OCI-LY7 (cell line): ENCODE measurements at regions of chr4 and their contacts with region 1.

Region 1: DNA sequence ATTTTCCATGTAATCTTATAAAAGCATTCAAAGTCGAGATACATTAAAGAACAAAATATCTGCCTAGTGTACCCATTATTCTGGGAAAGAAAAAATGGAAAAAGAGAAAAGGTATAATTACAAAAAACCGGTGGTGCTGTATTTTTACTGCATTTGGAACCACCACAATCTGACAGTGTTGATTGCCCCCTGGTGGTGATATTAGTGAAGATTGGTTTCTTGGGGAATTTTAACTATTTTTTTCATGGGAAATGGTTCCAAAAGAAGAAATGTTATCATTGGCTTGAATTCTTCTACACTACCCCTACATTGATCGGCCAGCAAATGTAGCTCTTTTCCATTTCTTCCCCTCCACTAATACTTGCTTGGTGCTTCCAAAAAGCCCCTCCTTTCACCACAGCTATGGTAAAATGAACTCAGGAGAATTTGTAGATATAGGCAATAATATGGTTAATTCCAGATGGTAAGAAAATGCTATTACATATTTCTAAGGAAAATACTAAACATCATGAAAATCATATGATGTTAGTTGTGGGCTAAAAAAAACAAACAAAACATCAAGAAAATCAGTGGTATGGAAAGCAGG is 50.0 kb downstream of the COX18 start:
- DNase-seq: peak; percentile 61
- H3K4me3 ChIP-seq: no peak overlapping the region
- H3K27ac ChIP-seq: no peak overlapping the region
- H3K4me1 ChIP-seq: no peaks in the 10 kb centered on the region
- CTCF ChIP-seq: peak; percentile 91

Region 2: DNA sequence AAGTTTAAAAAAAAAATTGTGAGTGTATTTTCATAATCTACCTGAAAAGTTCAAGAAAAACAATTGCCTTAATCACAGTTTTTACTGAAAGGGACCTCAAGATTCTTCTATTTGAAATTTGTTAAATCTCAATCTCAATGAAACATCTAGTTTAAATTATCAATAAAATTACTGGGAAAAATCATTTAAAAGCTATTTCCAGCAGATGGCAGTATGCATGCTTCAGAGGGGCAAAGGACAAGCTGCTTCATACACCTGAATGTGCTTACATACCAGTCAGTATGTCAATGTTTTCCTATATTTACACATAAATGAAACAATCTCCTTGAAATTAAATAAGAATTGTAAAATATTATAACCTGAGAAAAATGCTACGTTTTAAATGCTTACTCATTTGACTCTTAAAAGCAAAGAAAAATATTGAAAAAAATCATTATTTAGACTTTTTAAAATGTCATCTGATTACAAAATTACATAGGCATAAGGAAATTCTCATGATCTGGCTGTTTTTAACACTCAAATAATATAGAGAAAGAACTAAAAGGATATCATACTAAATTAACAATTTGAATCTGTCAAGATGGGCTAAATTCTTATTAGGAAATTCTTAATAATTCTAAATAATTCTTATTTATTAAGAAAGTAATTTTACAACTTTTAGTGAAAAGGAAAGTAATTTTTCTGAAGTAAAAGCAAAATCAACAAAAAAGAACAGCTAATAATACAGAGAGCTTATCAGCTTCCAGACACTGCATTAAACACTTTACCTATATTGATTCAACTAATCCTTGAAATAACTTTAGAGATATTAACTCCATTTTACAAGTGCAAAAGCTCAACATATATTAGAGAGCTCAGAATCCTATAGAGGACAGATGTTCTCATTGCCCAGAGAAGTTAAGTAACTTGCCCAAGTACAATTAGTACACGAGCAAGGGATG is 692.6 kb before region 1 on chr4:
- CTCF ChIA-PET with region 1: no interaction called
- POLR2A ChIA-PET with region 1: no interaction called
- intact Hi-C with region 1: loop called (anchors 10 kb)
- DNase-seq: peak; percentile 41
- H3K4me3 ChIP-seq: no peak overlapping the region
- H3K27ac ChIP-seq: no peak overlapping the region
- H3K4me1 ChIP-seq: no peaks in the 10 kb centered on the region
- CTCF ChIP-seq: peak; percentile 83

Region 3: GRCh38 chr4:72505314-72505744 is 514.2 kb before region 1 on chr4:
- CTCF ChIA-PET with region 1: no interaction called
- POLR2A ChIA-PET with region 1: no interaction called
- intact Hi-C with region 1: loop called (anchors 5 kb)
- DNase-seq: peak; percentile 37
- H3K4me3 ChIP-seq: no peak overlapping the region
- H3K27ac ChIP-seq: no peak overlapping the region
- H3K4me1 ChIP-seq: no peaks in the 10 kb centered on the region
- CTCF ChIP-seq: peak; percentile 84

Region 4: DNA sequence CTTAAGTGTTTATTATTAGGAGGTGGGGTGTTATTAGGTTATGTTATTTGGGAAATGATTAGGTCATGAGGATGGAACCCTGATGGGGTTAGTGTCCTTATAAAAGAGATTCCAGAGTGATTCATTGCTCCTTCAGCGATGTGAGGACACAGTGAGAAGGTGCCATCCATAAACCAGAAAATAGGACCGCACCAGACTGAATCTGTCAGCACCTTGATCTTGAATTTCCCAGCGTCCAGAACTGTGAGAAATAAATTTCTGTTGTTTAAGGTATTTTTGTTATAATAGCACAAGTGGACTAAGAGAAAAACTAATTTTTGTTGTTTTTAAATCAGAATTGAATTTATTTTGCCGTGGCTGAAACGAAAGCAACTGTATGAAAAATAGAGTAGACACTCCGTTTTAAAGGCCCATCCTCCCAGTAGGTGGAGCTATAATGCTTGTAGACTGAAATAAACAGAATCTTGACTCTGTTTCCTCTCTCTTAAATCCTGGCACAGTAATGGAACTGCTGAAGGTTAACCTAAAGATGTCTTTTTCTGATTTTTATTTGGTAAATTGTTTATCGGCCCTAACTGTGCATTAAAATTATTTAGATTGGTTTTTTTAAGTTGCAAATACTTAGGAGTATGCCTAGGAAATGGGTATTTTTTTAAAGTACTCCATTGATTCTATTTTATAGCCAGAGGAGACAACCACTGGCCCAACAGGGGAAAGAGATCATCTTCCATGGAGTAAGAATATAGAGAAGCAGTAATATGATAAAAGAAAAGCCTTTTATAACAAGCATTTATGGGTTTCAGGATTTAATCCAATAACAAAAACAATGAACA is 317.4 kb before region 1 on chr4:
- CTCF ChIA-PET with region 1: no interaction called
- POLR2A ChIA-PET with region 1: no interaction called
- intact Hi-C with region 1: loop called (anchors 1 kb)
- DNase-seq: peak; percentile 65
- H3K4me3 ChIP-seq: peak overlapping the region; percentile 38
- H3K27ac ChIP-seq: no peak overlapping the region
- H3K4me1 ChIP-seq: no peaks in the 10 kb centered on the region
- CTCF ChIP-seq: peak; percentile 90

Region 5: GRCh38 chr4:73006286-73006990 is 13.1 kb before region 1 on chr4:
- CTCF ChIA-PET with region 1: no interaction called
- POLR2A ChIA-PET with region 1: no interaction called
- intact Hi-C with region 1: no loop called
- DNase-seq: peak; percentile 19
- H3K4me3 ChIP-seq: no peak overlapping the region
- H3K27ac ChIP-seq: no peak overlapping the region
- H3K4me1 ChIP-seq: peaks cover 8% of the 10 kb centered on the region
- CTCF ChIP-seq: no peak